B cell (primary cell): ENCODE measurements at regions of chr17 and their contacts with region 1.

Region 1: DNA sequence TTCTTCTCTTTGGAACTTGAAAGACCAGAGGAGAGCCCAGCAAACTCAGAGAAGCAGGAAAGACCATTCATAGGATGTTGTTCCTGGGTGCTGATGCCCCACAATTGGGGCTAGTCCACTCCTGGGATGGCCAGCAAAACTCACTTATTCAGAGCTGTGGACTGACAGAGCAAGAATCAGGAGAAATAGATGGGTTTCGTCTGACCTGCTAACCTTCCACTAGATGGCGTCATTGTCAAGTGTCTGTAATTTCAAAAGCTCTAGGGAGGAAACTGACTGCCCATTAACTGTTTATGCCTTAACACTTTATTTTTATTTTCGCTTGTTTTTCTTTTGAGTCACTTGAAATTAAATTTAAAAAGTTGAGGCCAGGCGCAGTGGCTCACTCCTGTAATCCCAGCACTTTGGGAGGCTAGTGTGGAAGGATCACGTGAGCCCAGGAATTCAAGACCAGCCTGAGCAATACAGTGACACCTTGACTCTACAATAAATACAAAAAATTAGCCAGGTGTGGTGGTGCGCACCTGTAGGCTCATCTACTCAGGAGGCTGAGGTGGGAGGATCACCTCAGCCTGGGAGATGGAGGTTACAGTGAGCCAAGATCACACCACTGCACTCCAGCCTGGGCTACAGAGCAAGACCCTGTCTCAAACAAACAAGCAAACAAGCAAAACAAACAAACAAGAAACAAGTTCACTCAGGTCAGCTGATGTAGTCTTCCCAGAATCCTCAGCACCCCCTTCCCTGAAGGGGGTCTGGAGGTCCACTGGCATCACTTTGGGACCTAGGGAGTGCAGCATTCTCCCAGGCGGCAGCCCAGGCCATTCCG is 28.6 kb upstream of the MILR1 start:
- DNase-seq: peak; percentile 84
- ATAC-seq: peak; percentile 82
- H3K4me3 ChIP-seq: no peak overlapping the region
- H3K4me3 Mint-ChIP-seq: no peak overlapping the region
- H3K27ac ChIP-seq: no peak overlapping the region
- H3K27ac Mint-ChIP-seq: no peak overlapping the region
- H3K4me1 ChIP-seq: peaks cover 3 to 8% of the 10 kb centered on the region in 2 donors
- H3K4me1 Mint-ChIP-seq: peaks cover 5% of the 10 kb centered on the region
- H3K27me3 ChIP-seq: no peaks in the 10 kb centered on the region
- H3K27me3 Mint-ChIP-seq: no peaks in the 10 kb centered on the region
- CTCF ChIP-seq: peak; percentile 81

Region 2: DNA sequence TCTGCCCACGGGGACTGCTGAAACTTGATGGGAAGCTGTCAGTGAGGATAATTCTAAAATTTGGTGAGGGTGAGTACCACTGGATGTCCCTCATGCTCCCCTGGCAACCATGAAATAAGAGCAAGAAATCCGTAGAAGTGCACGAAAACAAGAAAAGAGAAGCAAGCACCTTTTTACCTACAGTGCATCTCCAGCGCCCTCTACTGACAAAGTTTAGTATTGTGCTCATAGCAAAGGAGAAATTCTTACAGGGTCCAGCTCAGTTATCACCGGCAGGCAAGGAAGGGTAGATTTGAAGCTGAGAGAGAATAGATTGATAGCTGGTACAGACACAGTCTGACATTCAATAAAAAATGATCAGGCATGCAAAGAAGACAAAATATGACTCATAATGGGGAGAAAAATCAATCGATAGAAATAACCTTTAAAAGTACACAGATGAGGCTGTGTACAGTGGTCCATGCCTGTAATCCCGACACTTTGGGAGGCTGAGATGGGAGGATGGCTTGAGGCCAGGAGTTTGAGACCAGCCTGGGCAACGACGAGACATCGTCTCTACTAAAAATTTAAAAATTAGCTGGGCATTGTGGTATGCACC is 129.0 kb before region 1 on chr17:
- CTCF ChIA-PET with region 1: interaction called, 16 read pairs
- POLR2A ChIA-PET with region 1: no interaction called
- intact Hi-C with region 1: no loop called
- DNase-seq: no peak
- ATAC-seq: no peak
- H3K4me3 ChIP-seq: no peak overlapping the region
- H3K4me3 Mint-ChIP-seq: no peak overlapping the region
- H3K27ac ChIP-seq: no peak overlapping the region
- H3K27ac Mint-ChIP-seq: no peak overlapping the region
- H3K4me1 ChIP-seq: no peaks in the 10 kb centered on the region
- H3K4me1 Mint-ChIP-seq: no peaks in the 10 kb centered on the region
- H3K27me3 ChIP-seq: no peaks in the 10 kb centered on the region
- H3K27me3 Mint-ChIP-seq: no peaks in the 10 kb centered on the region
- CTCF ChIP-seq: peak; percentile 52

Region 3: GRCh38 chr17:64382061-64382583 is 38.2 kb before region 1 on chr17:
- CTCF ChIA-PET with region 1: interaction called, 22 read pairs
- POLR2A ChIA-PET with region 1: no interaction called
- intact Hi-C with region 1: no loop called
- DNase-seq: no peak
- ATAC-seq: no peak
- H3K4me3 ChIP-seq: no peak overlapping the region
- H3K4me3 Mint-ChIP-seq: no peak overlapping the region
- H3K27ac ChIP-seq: no peak overlapping the region
- H3K27ac Mint-ChIP-seq: no peak overlapping the region
- H3K4me1 ChIP-seq: no peaks in the 10 kb centered on the region
- H3K4me1 Mint-ChIP-seq: no peaks in the 10 kb centered on the region
- H3K27me3 ChIP-seq: no peaks in the 10 kb centered on the region
- H3K27me3 Mint-ChIP-seq: no peaks in the 10 kb centered on the region
- CTCF ChIP-seq: no peak

Region 4: DNA sequence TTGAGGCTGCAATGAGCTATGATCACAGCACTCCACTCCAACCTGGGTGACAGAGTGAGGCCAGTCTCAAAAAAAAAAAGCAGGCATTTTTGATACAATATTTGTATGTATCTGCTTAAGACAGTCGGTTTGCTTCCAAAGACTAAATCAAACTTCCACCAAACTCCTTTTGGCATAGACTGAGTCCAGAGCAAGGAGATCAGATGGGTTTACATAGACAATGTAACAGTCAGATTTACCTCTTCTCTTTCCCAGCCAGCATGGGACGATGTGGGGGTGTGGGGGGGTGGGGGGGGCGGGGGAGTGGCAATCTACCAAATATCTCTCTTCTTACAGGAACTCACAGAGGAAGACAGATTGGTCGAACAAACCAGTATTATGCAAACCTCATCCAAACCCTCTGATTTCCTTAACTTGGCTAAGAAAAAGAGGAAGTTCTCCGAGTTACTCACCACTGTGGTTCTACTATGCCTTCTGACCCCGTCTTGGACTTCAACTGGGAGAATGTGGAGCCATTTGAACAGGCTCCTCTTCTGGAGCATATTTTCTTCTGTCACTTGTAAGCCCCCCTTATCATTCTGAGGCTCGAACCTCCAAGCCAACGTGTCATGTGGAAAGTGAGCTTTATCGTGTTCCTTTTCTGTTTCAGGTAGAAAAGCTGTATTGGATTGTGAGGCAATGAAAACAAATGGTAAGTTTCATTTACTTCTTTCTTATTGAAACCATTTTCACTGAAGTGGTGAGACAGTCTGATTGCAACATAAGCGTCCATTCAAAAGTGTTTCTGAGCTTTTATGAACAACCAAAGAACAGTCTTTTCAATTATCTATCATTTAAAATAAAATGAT is 28.5 kb after region 1 on chr17 and contains the start of gene MILR1:
- CTCF ChIA-PET with region 1: interaction called, 25 read pairs
- POLR2A ChIA-PET with region 1: no interaction called
- intact Hi-C with region 1: no loop called
- DNase-seq: peak; percentile 77
- ATAC-seq: peak; percentile 96
- H3K4me3 ChIP-seq: peak within 1 kb of the TSS in 4 of 5 experiments; percentile 48 to 86 (median 64)
- H3K4me3 Mint-ChIP-seq: peak within 1 kb of the TSS; percentile 88
- H3K27ac ChIP-seq: peak within 1 kb of the TSS; percentile 49 to 77
- H3K27ac Mint-ChIP-seq: peak within 1 kb of the TSS; percentile 94
- H3K4me1 ChIP-seq: peaks cover 24 to 37% of the 10 kb centered on the region in 2 donors
- H3K4me1 Mint-ChIP-seq: peaks cover 40% of the 10 kb centered on the region
- H3K27me3 ChIP-seq: no peaks in the 10 kb centered on the region
- H3K27me3 Mint-ChIP-seq: no peaks in the 10 kb centered on the region
- CTCF ChIP-seq: no peak
- total RNA-seq, gene MILR1: 9.4 and 14.7 TPM in 2 replicates

Region 5: GRCh38 chr17:64506576-64507477 is 86.5 kb after region 1 on chr17 and contains the start of gene CEP95:
- CTCF ChIA-PET with region 1: interaction called, 125 read pairs
- POLR2A ChIA-PET with region 1: interaction called, 27 read pairs
- intact Hi-C with region 1: loop called (anchors 1 kb)
- DNase-seq: peak; percentile 99
- ATAC-seq: peak; percentile 62
- H3K4me3 ChIP-seq: peak within 1 kb of the TSS; percentile 97 to 100 (median 99)
- H3K4me3 Mint-ChIP-seq: peak within 1 kb of the TSS; percentile 97
- H3K27ac ChIP-seq: peak within 1 kb of the TSS; percentile 99 to 100
- H3K27ac Mint-ChIP-seq: peak within 1 kb of the TSS; percentile 99
- H3K4me1 ChIP-seq: peaks cover 31 to 32% of the 10 kb centered on the region in 2 donors
- H3K4me1 Mint-ChIP-seq: peaks cover 48% of the 10 kb centered on the region
- H3K27me3 ChIP-seq: no peaks in the 10 kb centered on the region
- H3K27me3 Mint-ChIP-seq: no peaks in the 10 kb centered on the region
- CTCF ChIP-seq: no peak
- total RNA-seq, gene CEP95: 122 and 129 TPM in 2 replicates

Region 6: DNA sequence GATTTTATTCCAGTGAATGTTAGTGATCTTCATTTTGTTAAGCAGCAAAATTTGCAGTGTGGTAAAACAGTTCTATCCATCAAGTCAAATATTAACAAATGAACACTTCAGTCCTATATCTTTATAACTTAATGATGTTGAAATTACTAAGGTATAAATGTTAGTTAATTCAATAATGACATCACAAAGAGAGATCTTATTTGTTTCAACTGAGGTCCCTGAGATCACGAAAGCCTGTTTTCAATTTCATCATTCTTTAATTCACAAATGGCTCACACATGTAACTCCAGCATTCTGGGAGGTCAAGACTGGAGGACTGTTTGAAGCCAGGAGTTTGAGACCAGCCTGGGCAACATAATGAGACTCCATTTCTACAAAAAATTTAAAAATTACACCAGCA is 227.9 kb after region 1 on chr17:
- CTCF ChIA-PET with region 1: interaction called, 63 read pairs
- POLR2A ChIA-PET with region 1: no interaction called
- intact Hi-C with region 1: no loop called
- DNase-seq: no peak
- ATAC-seq: no peak
- H3K4me3 ChIP-seq: no peak overlapping the region
- H3K4me3 Mint-ChIP-seq: no peak overlapping the region
- H3K27ac ChIP-seq: no peak overlapping the region
- H3K27ac Mint-ChIP-seq: no peak overlapping the region
- H3K4me1 ChIP-seq: no peaks in the 10 kb centered on the region
- H3K4me1 Mint-ChIP-seq: peaks cover 13% of the 10 kb centered on the region
- H3K27me3 ChIP-seq: no peaks in the 10 kb centered on the region
- H3K27me3 Mint-ChIP-seq: no peaks in the 10 kb centered on the region
- CTCF ChIP-seq: no peak